WTC11 (cell line): ENCODE measurements at regions of chr1 and their contacts with region 1.

Region 1: GRCh38 chr1:225480825-225481434 is 53.1 kb upstream of the LBR start:
- DNase-seq: peak; percentile 90
- ATAC-seq: peak; percentile 92
- H3K4me3 Mint-ChIP-seq: no peak overlapping the region
- H3K27ac Mint-ChIP-seq: 0 out of 2 replicates have a peak overlapping the region, but pooled peaks have one; percentile 21
- H3K4me1 Mint-ChIP-seq: peaks cover 16% of the 10 kb centered on the region
- H3K27me3 Mint-ChIP-seq: peaks cover 4% of the 10 kb centered on the region; the same call in 1 of the 2 replicates
- CTCF ChIP-seq: peak; percentile 92

Region 2: GRCh38 chr1:225156254-225156653 is 324.7 kb before region 1 on chr1:
- CTCF ChIA-PET with region 1: no interaction called
- POLR2A ChIA-PET with region 1: no interaction called
- DNase-seq: no peak
- ATAC-seq: no peak
- H3K4me3 Mint-ChIP-seq: no peak overlapping the region
- H3K27ac Mint-ChIP-seq: no peak overlapping the region
- H3K4me1 Mint-ChIP-seq: no peaks in the 10 kb centered on the region; the same call in 1 of the 2 replicates
- H3K27me3 Mint-ChIP-seq: no peaks in the 10 kb centered on the region
- CTCF ChIP-seq: no peak

Region 3: DNA sequence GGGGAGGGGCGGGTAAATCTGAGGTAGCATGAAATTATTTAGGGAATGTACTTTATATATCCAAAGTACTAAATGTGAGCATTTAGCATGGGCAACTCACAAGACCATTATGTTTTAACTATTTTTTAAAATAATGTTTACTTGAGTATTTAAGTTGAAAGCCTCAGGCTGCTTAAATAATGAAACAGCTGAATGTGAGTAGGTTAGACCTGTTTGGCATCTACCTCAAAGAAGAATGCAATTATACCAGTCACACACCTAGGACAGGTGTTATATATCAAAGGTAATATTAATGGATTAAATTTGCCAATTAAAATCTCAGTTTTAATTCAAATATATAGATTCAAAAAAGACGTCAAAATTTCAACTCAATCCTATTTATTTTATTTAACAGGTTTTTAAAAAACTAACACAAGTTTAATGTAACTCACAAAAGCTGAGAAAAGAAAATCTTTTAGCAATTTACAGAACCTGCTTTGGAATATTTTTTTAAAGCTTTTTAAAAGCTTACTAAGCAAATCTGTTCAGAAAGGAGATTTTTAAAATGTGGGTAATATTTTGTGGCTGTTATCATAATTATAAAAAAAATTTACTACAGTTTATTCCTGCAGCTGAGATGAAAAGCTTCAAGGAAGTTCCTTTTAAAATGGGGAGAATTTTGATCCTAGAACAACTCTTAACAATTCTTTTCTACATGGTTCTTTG is 51.5 kb after region 1 on chr1:
- CTCF ChIA-PET with region 1: no interaction called
- POLR2A ChIA-PET with region 1: no interaction called
- DNase-seq: no peak
- ATAC-seq: no peak
- H3K4me3 Mint-ChIP-seq: no peak overlapping the region
- H3K27ac Mint-ChIP-seq: no peak overlapping the region
- H3K4me1 Mint-ChIP-seq: peaks cover 43% of the 10 kb centered on the region
- H3K27me3 Mint-ChIP-seq: no peaks in the 10 kb centered on the region
- CTCF ChIP-seq: no peak

Region 4: GRCh38 chr1:225652729-225653462 is 172.0 kb after region 1 on chr1 and contains the start of gene ENAH:
- CTCF ChIA-PET with region 1: interaction called, 26 read pairs
- POLR2A ChIA-PET with region 1: interaction called, 4 read pairs
- DNase-seq: peak; percentile 77
- ATAC-seq: peak; percentile 81
- H3K4me3 Mint-ChIP-seq: peak within 1 kb of the TSS; percentile 93
- H3K27ac Mint-ChIP-seq: peak within 1 kb of the TSS; percentile 98
- H3K4me1 Mint-ChIP-seq: peaks cover 49% of the 10 kb centered on the region
- H3K27me3 Mint-ChIP-seq: no peaks in the 10 kb centered on the region
- CTCF ChIP-seq: no peak
- total RNA-seq, gene ENAH: 223 to 229 TPM (median 227 TPM) in 3 replicates

Region 5: GRCh38 chr1:225772323-225772768 is 291.4 kb after region 1 on chr1:
- CTCF ChIA-PET with region 1: interaction called, 99 read pairs
- POLR2A ChIA-PET with region 1: no interaction called
- DNase-seq: peak; percentile 88
- ATAC-seq: peak; percentile 86
- H3K4me3 Mint-ChIP-seq: no peak overlapping the region
- H3K27ac Mint-ChIP-seq: peak overlapping the region; percentile 77
- H3K4me1 Mint-ChIP-seq: peaks cover 53% of the 10 kb centered on the region
- H3K27me3 Mint-ChIP-seq: no peaks in the 10 kb centered on the region; the same call in 1 of the 2 replicates
- CTCF ChIP-seq: no peak

Region 6: GRCh38 chr1:225809842-225810578 is 329.1 kb after region 1 on chr1 and contains the start of gene EPHX1:
- CTCF ChIA-PET with region 1: interaction called, 21 read pairs
- POLR2A ChIA-PET with region 1: no interaction called
- DNase-seq: peak; percentile 93
- ATAC-seq: peak; percentile 90
- H3K4me3 Mint-ChIP-seq: peak within 1 kb of the TSS; percentile 86
- H3K27ac Mint-ChIP-seq: peak within 1 kb of the TSS; percentile 68
- H3K4me1 Mint-ChIP-seq: peaks cover 30% of the 10 kb centered on the region
- H3K27me3 Mint-ChIP-seq: peaks cover 3% of the 10 kb centered on the region; the same call in 1 of the 2 replicates
- CTCF ChIP-seq: no peak
- total RNA-seq, gene EPHX1: 60.9 to 66.2 TPM (median 64.4 TPM) in 3 replicates

Region 7: GRCh38 chr1:225987491-225988316 is 506.8 kb after region 1 on chr1:
- CTCF ChIA-PET with region 1: interaction called, 17 read pairs
- POLR2A ChIA-PET with region 1: no interaction called
- DNase-seq: no peak
- ATAC-seq: no peak
- H3K4me3 Mint-ChIP-seq: no peak overlapping the region
- H3K27ac Mint-ChIP-seq: peak overlapping the region; percentile 43; the same call in 1 of the 2 replicates
- H3K4me1 Mint-ChIP-seq: no peaks in the 10 kb centered on the region
- H3K27me3 Mint-ChIP-seq: no peaks in the 10 kb centered on the region
- CTCF ChIP-seq: peak; percentile 64